ENCODE measurements at regions of chr9 and their contacts with region 1.

Region 1: GRCh38 chr9:94504358-94504757 is 50.5 kb upstream of the PCAT7 start:
- DNase-seq: no peak
- H3K4me3 ChIP-seq: no peak overlapping the region
- H3K27ac ChIP-seq: no peak overlapping the region
- H3K4me1 ChIP-seq: no peaks in the 10 kb centered on the region
- H3K27me3 ChIP-seq: peaks cover 2% of the 10 kb centered on the region
- CTCF ChIP-seq: no peak

Region 2: DNA sequence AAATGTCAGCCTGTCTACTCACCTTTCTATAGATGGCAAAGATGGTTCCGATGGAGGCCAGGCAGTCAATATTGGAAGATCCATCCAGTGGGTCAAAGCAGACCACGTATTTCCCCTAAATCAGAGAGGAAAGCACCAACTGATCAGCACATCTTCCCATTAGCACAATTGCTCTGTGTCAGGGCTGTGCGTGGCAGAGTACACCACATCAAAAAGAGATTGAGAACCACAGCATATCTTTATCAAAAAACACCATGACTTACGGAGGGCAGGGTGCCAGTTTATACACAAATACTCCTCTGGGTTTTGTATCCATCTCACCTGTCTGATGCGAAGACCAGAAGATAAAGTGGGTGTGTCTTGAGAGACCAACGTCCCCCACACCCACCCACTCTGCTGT is 80.2 kb after region 1 on chr9:
- CTCF ChIA-PET with region 1: no interaction called
- dilution Hi-C with region 1: loop called (anchors 5 kb)
- in situ Hi-C with region 1: no loop called
- intact Hi-C with region 1: no loop called
- DNase-seq: no peak
- H3K4me3 ChIP-seq: no peak overlapping the region
- H3K27ac ChIP-seq: no peak overlapping the region
- H3K4me1 ChIP-seq: peaks cover 8% of the 10 kb centered on the region
- H3K27me3 ChIP-seq: no peaks in the 10 kb centered on the region
- CTCF ChIP-seq: no peak